ENCODE measurements at regions of chr17 and their contacts with region 1.

Region 1: DNA sequence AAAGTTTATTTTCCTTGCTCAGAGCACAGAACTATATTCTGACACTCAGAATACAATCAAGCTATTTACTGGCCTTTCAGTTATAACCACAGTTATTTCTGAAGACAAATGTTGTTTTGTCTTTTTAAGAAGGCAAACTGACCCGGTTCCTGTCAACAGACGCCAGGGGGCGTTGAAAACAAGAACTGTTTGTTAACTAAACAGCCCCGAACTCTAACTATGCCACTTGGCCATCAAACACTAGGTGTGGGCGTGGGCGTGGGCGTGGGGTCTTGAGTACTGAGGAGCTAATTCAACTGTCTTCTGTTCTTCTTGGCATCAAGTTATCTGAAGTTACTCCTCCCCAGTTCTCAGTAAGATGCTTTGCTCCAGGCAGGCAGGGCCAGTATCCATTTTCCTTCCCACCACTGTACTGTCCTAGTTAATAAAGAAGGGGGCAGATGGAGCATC is 63.2 kb upstream of the MTMR4 start:
- DNase-seq: peak; percentile 66
- ATAC-seq: no peak
- H3K4me3 Mint-ChIP-seq: no peak overlapping the region
- H3K27ac Mint-ChIP-seq: no peak overlapping the region
- H3K4me1 Mint-ChIP-seq: peaks cover 9% of the 10 kb centered on the region
- H3K27me3 Mint-ChIP-seq: peaks cover 11% of the 10 kb centered on the region

Region 2: DNA sequence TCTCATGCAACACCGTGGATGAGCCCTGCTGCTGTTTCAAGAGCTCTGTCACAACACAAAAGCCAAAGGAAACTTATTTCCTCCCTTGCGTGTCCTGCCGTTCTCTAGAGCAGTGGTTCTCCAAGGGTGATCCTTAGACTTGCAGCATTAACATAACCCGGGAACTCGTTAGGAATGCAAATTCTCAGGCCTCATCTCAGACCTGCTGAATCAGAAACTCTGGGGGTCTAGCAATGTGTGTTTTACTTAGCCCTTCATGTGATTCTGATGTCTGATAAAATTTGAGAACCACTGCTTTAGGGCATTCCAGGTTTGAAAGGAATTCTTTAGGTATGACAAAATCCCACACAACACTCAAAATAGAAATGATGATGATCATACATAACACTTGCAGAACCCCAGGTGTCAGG is 11.9 kb before region 1 on chr17:
- CTCF ChIA-PET with region 1: interaction called, 14 read pairs
- POLR2A ChIA-PET with region 1: no interaction called
- DNase-seq: no peak
- ATAC-seq: no peak
- H3K4me3 Mint-ChIP-seq: no peak overlapping the region
- H3K27ac Mint-ChIP-seq: no peak overlapping the region
- H3K4me1 Mint-ChIP-seq: no peaks in the 10 kb centered on the region
- H3K27me3 Mint-ChIP-seq: peaks cover 8% of the 10 kb centered on the region

Region 3: DNA sequence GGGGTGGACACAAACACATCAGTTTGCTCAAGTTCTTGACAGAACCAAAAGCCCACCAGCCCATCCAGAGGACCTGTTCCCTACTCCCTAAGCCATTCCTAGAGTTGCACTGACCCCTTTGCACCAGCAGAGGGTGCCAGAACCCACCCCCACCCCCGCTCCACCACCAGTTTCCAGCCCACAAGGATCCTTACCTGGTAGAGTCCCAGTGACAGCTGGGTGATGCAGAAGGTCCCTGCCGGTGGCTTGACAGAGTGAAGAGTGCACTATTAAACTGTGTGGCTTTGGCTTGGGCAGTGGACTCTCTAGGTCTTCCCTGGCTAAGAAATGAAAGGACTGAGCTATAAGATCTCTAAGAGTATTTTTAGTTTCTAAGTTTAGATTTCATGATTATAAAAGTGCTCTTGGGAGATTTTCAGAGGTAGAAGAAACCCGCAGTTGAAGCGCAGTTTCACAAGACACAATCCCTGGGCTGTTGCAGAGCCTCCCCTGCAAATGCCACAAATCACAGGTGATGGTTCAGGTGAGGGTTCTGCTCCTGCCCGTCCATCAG is 10.1 kb after region 1 on chr17:
- CTCF ChIA-PET with region 1: interaction called, 31 read pairs
- POLR2A ChIA-PET with region 1: interaction called, 4 read pairs
- DNase-seq: peak; percentile 66
- ATAC-seq: peak; percentile 76
- H3K4me3 Mint-ChIP-seq: no peak overlapping the region
- H3K27ac Mint-ChIP-seq: no peak overlapping the region
- H3K4me1 Mint-ChIP-seq: no peaks in the 10 kb centered on the region
- H3K27me3 Mint-ChIP-seq: peaks cover 10% of the 10 kb centered on the region

Region 4: DNA sequence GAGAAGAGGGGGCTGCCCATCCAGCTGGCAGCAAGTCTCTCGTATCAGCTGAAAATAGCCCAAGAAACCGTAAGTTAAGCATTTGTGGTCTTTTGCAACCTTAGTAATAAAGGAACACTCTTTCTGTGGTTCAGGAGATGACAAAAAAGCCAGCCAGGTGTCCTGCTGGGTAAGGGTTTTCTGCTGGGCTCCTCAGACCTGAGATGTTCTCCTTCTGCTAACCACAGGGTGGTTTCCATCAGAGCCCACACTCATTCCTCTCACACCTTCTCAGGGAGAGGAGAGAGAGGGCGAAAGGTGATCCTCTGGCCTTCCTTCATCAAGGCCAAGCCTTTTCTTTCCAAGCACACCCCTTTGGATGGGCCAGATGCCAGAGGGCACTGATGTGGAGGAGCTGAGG is 43.5 kb after region 1 on chr17:
- CTCF ChIA-PET with region 1: interaction called, 13 read pairs
- POLR2A ChIA-PET with region 1: no interaction called
- DNase-seq: no peak
- ATAC-seq: no peak
- H3K4me3 Mint-ChIP-seq: no peak overlapping the region
- H3K27ac Mint-ChIP-seq: no peak overlapping the region
- H3K4me1 Mint-ChIP-seq: peaks cover 9% of the 10 kb centered on the region
- H3K27me3 Mint-ChIP-seq: peaks cover 2% of the 10 kb centered on the region

Region 5: DNA sequence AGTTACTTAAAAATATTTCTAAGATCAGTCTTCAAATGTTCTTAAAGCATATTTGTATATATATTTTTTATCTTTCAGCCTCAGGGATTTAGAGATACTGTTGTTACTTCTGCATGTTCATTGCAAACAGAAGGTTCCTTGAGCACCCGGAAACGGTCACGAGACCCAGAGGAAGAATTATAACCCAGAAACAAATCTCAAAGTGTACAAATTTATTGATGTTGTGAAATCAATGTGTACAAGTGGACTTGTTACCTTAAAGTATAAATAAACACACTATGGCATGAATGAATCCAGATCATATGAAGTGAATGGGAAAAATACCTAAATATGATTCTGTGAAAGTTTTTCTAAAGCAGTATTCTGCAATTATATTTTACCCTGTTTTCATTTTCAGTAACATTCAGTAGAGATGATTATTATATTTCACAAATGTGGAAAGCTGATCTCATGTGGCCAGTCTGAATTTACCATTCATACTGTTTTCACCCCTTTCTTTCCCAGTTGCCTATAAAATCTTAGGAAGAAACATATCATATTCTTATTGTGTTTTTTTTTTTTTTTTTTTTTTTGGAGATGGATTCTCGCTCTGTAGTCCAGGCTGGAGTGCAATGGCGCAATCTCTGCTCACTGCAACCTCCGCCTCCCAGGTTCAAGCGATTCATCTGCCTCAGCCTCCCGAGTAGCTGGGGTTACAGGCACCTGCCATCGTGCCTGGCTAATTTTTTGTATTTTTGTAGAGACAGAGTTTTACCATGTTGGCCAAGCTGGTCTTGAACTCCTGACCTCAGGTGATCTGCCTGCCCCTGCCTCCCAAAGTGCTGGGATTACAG is 156.6 kb after region 1 on chr17:
- CTCF ChIA-PET with region 1: no interaction called
- POLR2A ChIA-PET with region 1: no interaction called
- DNase-seq: no peak
- ATAC-seq: no peak
- H3K4me3 Mint-ChIP-seq: no peak overlapping the region
- H3K27ac Mint-ChIP-seq: no peak overlapping the region
- H3K4me1 Mint-ChIP-seq: no peaks in the 10 kb centered on the region
- H3K27me3 Mint-ChIP-seq: no peaks in the 10 kb centered on the region

Region 6: DNA sequence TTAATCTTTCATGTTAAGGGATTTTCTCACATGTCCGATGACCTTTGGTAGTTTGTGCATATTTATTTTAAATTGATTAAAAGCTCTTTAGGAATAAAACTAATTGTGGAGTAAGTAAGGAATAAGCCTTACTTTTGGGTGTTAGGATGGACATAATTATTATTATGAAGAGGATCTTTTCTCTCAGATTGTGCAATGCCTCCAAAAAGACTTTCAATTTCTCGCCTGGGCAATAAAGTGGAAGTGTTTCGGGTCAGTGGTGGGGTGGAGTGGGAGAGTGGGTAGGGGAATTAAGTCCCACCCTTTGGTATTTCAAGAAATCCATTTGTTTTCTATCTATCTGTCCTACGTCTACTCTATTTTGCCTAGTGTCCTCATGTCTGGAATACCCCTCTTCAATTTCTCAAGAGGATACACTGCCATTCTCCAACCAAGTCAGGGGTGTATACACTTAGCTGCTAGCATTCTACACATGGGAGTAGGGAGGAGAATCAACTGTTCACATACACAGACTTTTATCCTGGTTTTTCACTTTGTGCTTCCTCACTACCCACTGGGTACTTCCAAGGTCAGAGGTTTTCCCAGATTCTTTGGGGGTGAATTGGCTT is 307.8 kb after region 1 on chr17:
- CTCF ChIA-PET with region 1: no interaction called
- POLR2A ChIA-PET with region 1: no interaction called
- DNase-seq: no peak
- ATAC-seq: no peak
- H3K4me3 Mint-ChIP-seq: no peak overlapping the region
- H3K27ac Mint-ChIP-seq: no peak overlapping the region
- H3K4me1 Mint-ChIP-seq: no peaks in the 10 kb centered on the region
- H3K27me3 Mint-ChIP-seq: peaks cover 18% of the 10 kb centered on the region

Measured in activated CD8-positive, alpha-beta T cell treated with anti-CD3 and anti-CD28 coated beads, Interleukin-2, amount 10 ng/mL, durations not matched to agents 7 days and 5 days (primary cell).